ENCODE measurements at regions of chr22 and their contacts with region 1.

Region 1: GRCh38 chr22:37817705-37818408 is 5.3 kb upstream of the GALR3 start:
- DNase-seq: peak; percentile 94
- H3K4me3 ChIP-seq: peak overlapping the region in 7 of 8 donors; percentile 23 to 71 (median 43)
- H3K27ac ChIP-seq: peak overlapping the region in 6 of 8 donors; percentile 4 to 74 (median 68)
- H3K4me1 ChIP-seq: peaks cover 19 to 31% (median 22%) of the 10 kb centered on the region in 6 donors
- H3K27me3 ChIP-seq: peaks cover 0 to 63% (median 11%) of the 10 kb centered on the region in 7 donors
- CTCF ChIP-seq: peak; percentile 88 to 98 (median 95)
- POLR2A ChIP-seq: no peak

Region 2: GRCh38 chr22:37862570-37863325 is 44.9 kb after region 1 on chr22:
- intact Hi-C with region 1: loop called (anchors 2 kb)
- DNase-seq: no peak
- H3K4me3 ChIP-seq: no peak overlapping the region
- H3K27ac ChIP-seq: peak overlapping the region in 4 of 8 donors; percentile 0 to 46 (median 33)
- H3K4me1 ChIP-seq: peaks cover 0 to 20% (median 14%) of the 10 kb centered on the region in 6 donors
- H3K27me3 ChIP-seq: no peaks in the 10 kb centered on the region
- CTCF ChIP-seq: no peak
- POLR2A ChIP-seq: no peak

Region 3: GRCh38 chr22:37880668-37881440 is 63.0 kb after region 1 on chr22:
- intact Hi-C with region 1: no loop called
- DNase-seq: no peak
- H3K4me3 ChIP-seq: no peak overlapping the region
- H3K27ac ChIP-seq: no peak overlapping the region
- H3K4me1 ChIP-seq: no peaks in the 10 kb centered on the region
- H3K27me3 ChIP-seq: no peaks in the 10 kb centered on the region
- CTCF ChIP-seq: no peak
- POLR2A ChIP-seq: no peak

Region 4: GRCh38 chr22:37965940-37966664 is 148.2 kb after region 1 on chr22:
- intact Hi-C with region 1: loop called (anchors 10 kb)
- DNase-seq: no peak
- H3K4me3 ChIP-seq: no peak overlapping the region
- H3K27ac ChIP-seq: no peak overlapping the region
- H3K4me1 ChIP-seq: peaks cover 0 to 10% (median 4%) of the 10 kb centered on the region in 6 donors
- H3K27me3 ChIP-seq: no peaks in the 10 kb centered on the region
- CTCF ChIP-seq: no peak
- POLR2A ChIP-seq: no peak

Measured in spleen (tissue), 13 donors.